ENCODE measurements at regions of chr12 and their contacts with region 1.

Region 1: GRCh38 chr12:98397316-98398105 is 117.9 kb upstream of the TMPO start:
- DNase-seq: peak; percentile 67 to 89 (median 76)
- ATAC-seq: peak; percentile 96
- H3K4me3 ChIP-seq: peak overlapping the region; percentile 53
- H3K4me3 Mint-ChIP-seq: peak overlapping the region; percentile 75
- H3K27ac ChIP-seq: peak overlapping the region in 1 of 2 donors; percentile 37
- H3K27ac Mint-ChIP-seq: peak overlapping the region; percentile 16
- H3K4me1 ChIP-seq: peaks cover 23% of the 10 kb centered on the region
- H3K4me1 Mint-ChIP-seq: peaks cover 28% of the 10 kb centered on the region
- H3K27me3 ChIP-seq: no peaks in the 10 kb centered on the region
- H3K27me3 Mint-ChIP-seq: no peaks in the 10 kb centered on the region
- CTCF ChIP-seq: peak; percentile 82

Region 2: GRCh38 chr12:97148941-97149559 is 1248.5 kb before region 1 on chr12:
- CTCF ChIA-PET with region 1: no interaction called
- POLR2A ChIA-PET with region 1: no interaction called
- intact Hi-C with region 1: loop called in 1 of 2 experiments (anchors 1 kb)
- DNase-seq: peak in 13 of 14 experiments; percentile 4 to 57 (median 18)
- ATAC-seq: peak; percentile 68
- H3K4me3 ChIP-seq: no peak overlapping the region
- H3K4me3 Mint-ChIP-seq: no peak overlapping the region
- H3K27ac ChIP-seq: no peak overlapping the region
- H3K27ac Mint-ChIP-seq: no peak overlapping the region
- H3K4me1 ChIP-seq: no peaks in the 10 kb centered on the region
- H3K4me1 Mint-ChIP-seq: no peaks in the 10 kb centered on the region
- H3K27me3 ChIP-seq: peaks cover 0 to 10% of the 10 kb centered on the region in 2 experiments
- H3K27me3 Mint-ChIP-seq: peaks cover 17% of the 10 kb centered on the region
- CTCF ChIP-seq: peak; percentile 46

Region 3: GRCh38 chr12:97308576-97309198 is 1088.8 kb before region 1 on chr12:
- CTCF ChIA-PET with region 1: no interaction called
- POLR2A ChIA-PET with region 1: no interaction called
- intact Hi-C with region 1: loop called in 1 of 2 experiments (anchors 2 kb)
- DNase-seq: peak in 3 of 14 experiments; percentile 57 to 73 (median 73)
- ATAC-seq: peak; percentile 48
- H3K4me3 ChIP-seq: no peak overlapping the region
- H3K4me3 Mint-ChIP-seq: no peak overlapping the region
- H3K27ac ChIP-seq: no peak overlapping the region
- H3K27ac Mint-ChIP-seq: no peak overlapping the region
- H3K4me1 ChIP-seq: no peaks in the 10 kb centered on the region
- H3K4me1 Mint-ChIP-seq: no peaks in the 10 kb centered on the region
- H3K27me3 ChIP-seq: peaks cover 0 to 4% of the 10 kb centered on the region in 2 experiments
- H3K27me3 Mint-ChIP-seq: peaks cover 6% of the 10 kb centered on the region
- CTCF ChIP-seq: peak; percentile 93

Region 4: GRCh38 chr12:98418357-98419075 is 21.0 kb after region 1 on chr12:
- CTCF ChIA-PET with region 1: no interaction called
- POLR2A ChIA-PET with region 1: no interaction called
- intact Hi-C with region 1: no loop called
- DNase-seq: no peak
- ATAC-seq: no peak
- H3K4me3 ChIP-seq: no peak overlapping the region
- H3K4me3 Mint-ChIP-seq: no peak overlapping the region
- H3K27ac ChIP-seq: no peak overlapping the region
- H3K27ac Mint-ChIP-seq: no peak overlapping the region
- H3K4me1 ChIP-seq: no peaks in the 10 kb centered on the region
- H3K4me1 Mint-ChIP-seq: no peaks in the 10 kb centered on the region
- H3K27me3 ChIP-seq: no peaks in the 10 kb centered on the region
- H3K27me3 Mint-ChIP-seq: peaks cover 10% of the 10 kb centered on the region
- CTCF ChIP-seq: no peak

Measured in CD4-positive, alpha-beta T cell (primary cell).